PC-3 (cell line): ENCODE measurements at regions of chr10 and their contacts with region 1.

Region 1: GRCh38 chr10:22003079-22003913 is at the start of gene DNAJC1:
- DNase-seq: peak; percentile 95
- ATAC-seq: peak; percentile 97
- H3K4me3 ChIP-seq: peak within 1 kb of the TSS; percentile 81
- H3K27ac ChIP-seq: peak within 1 kb of the TSS; percentile 69
- H3K4me1 ChIP-seq: peaks cover 24% of the 10 kb centered on the region
- H3K27me3 ChIP-seq: no peaks in the 10 kb centered on the region
- CTCF ChIP-seq: no peak
- total RNA-seq, gene DNAJC1: 46.4 and 53.4 TPM in 2 replicates

Region 2: GRCh38 chr10:22049646-22050045 is 46.4 kb after region 1 on chr10:
- CTCF ChIA-PET with region 1: no interaction called
- POLR2A ChIA-PET with region 1: no interaction called
- intact Hi-C with region 1: loop called (anchors 1 kb)
- DNase-seq: peak; percentile 55
- ATAC-seq: peak; percentile 40; the same call in 1 of the 2 replicates
- H3K4me3 ChIP-seq: no peak overlapping the region
- H3K27ac ChIP-seq: peak overlapping the region; percentile 25
- H3K4me1 ChIP-seq: peaks cover 5% of the 10 kb centered on the region; the same call in 1 of the 2 replicates
- H3K27me3 ChIP-seq: no peaks in the 10 kb centered on the region
- CTCF ChIP-seq: no peak

Region 3: GRCh38 chr10:22067099-22067498 is 63.8 kb after region 1 on chr10:
- CTCF ChIA-PET with region 1: no interaction called
- POLR2A ChIA-PET with region 1: no interaction called
- intact Hi-C with region 1: loop called (anchors 5 kb)
- DNase-seq: no peak
- ATAC-seq: no peak
- H3K4me3 ChIP-seq: no peak overlapping the region
- H3K27ac ChIP-seq: no peak overlapping the region
- H3K4me1 ChIP-seq: no peaks in the 10 kb centered on the region
- H3K27me3 ChIP-seq: no peaks in the 10 kb centered on the region
- CTCF ChIP-seq: peak; percentile 21; the same call in 1 of the 2 replicates

Region 4: GRCh38 chr10:22228943-22229801 is 225.9 kb after region 1 on chr10:
- CTCF ChIA-PET with region 1: no interaction called
- POLR2A ChIA-PET with region 1: interaction called, 3 read pairs
- intact Hi-C with region 1: loop called (anchors 2 kb)
- DNase-seq: peak; percentile 86
- ATAC-seq: peak; percentile 71
- H3K4me3 ChIP-seq: peak overlapping the region; percentile 99
- H3K27ac ChIP-seq: peak overlapping the region; percentile 86
- H3K4me1 ChIP-seq: peaks cover 14% of the 10 kb centered on the region
- H3K27me3 ChIP-seq: no peaks in the 10 kb centered on the region
- CTCF ChIP-seq: no peak

Region 5: GRCh38 chr10:22244001-22244400 is 240.7 kb after region 1 on chr10:
- CTCF ChIA-PET with region 1: no interaction called
- POLR2A ChIA-PET with region 1: interaction called, 3 read pairs
- intact Hi-C with region 1: loop called (anchors 5 kb)
- DNase-seq: no peak
- ATAC-seq: no peak
- H3K4me3 ChIP-seq: peak overlapping the region; percentile 25; the same call in 1 of the 2 replicates
- H3K27ac ChIP-seq: peak overlapping the region; percentile 99
- H3K4me1 ChIP-seq: peaks cover 61% of the 10 kb centered on the region
- H3K27me3 ChIP-seq: no peaks in the 10 kb centered on the region
- CTCF ChIP-seq: peak; percentile 49

Region 6: GRCh38 chr10:22316285-22317120 is 313.2 kb after region 1 on chr10 and contains the start of gene COMMD3:
- CTCF ChIA-PET with region 1: no interaction called
- POLR2A ChIA-PET with region 1: interaction called, 3 read pairs
- intact Hi-C with region 1: loop called (anchors 5 kb)
- DNase-seq: peak; percentile 82
- ATAC-seq: peak; percentile 50
- H3K4me3 ChIP-seq: peak within 1 kb of the TSS; percentile 92
- H3K27ac ChIP-seq: peak within 1 kb of the TSS; percentile 99
- H3K4me1 ChIP-seq: peaks cover 37% of the 10 kb centered on the region
- H3K27me3 ChIP-seq: no peaks in the 10 kb centered on the region
- CTCF ChIP-seq: no peak
- total RNA-seq, gene COMMD3: 86.4 and 86.6 TPM in 2 replicates